B cell (primary cell): ENCODE measurements at regions of chr1 and their contacts with region 1.

Region 1: GRCh38 chr1:9724706-9725476 is 73.4 kb downstream of the PIK3CD start:
- DNase-seq: peak; percentile 79
- ATAC-seq: peak; percentile 77
- H3K4me3 ChIP-seq: no peak overlapping the region
- H3K4me3 Mint-ChIP-seq: no peak overlapping the region
- H3K27ac ChIP-seq: peak overlapping the region in 1 of 2 donors; percentile 18
- H3K27ac Mint-ChIP-seq: peak overlapping the region; percentile 77
- H3K4me1 ChIP-seq: peaks cover 8 to 26% of the 10 kb centered on the region in 2 donors
- H3K4me1 Mint-ChIP-seq: peaks cover 17% of the 10 kb centered on the region
- H3K27me3 ChIP-seq: no peaks in the 10 kb centered on the region
- H3K27me3 Mint-ChIP-seq: no peaks in the 10 kb centered on the region
- CTCF ChIP-seq: peak; percentile 88

Region 2: GRCh38 chr1:9700340-9700739 is 24.6 kb before region 1 on chr1:
- CTCF ChIA-PET with region 1: interaction called, 10 read pairs
- POLR2A ChIA-PET with region 1: no interaction called
- intact Hi-C with region 1: no loop called
- DNase-seq: no peak
- ATAC-seq: no peak
- H3K4me3 ChIP-seq: no peak overlapping the region
- H3K4me3 Mint-ChIP-seq: no peak overlapping the region
- H3K27ac ChIP-seq: peak overlapping the region in 1 of 2 donors; percentile 48
- H3K27ac Mint-ChIP-seq: peak overlapping the region; percentile 46
- H3K4me1 ChIP-seq: peaks cover 38 to 50% of the 10 kb centered on the region in 2 donors
- H3K4me1 Mint-ChIP-seq: peaks cover 57% of the 10 kb centered on the region
- H3K27me3 ChIP-seq: no peaks in the 10 kb centered on the region
- H3K27me3 Mint-ChIP-seq: no peaks in the 10 kb centered on the region
- CTCF ChIP-seq: no peak